PC-9 (cell line): ENCODE measurements at regions of chr6 and their contacts with region 1.

Region 1: DNA sequence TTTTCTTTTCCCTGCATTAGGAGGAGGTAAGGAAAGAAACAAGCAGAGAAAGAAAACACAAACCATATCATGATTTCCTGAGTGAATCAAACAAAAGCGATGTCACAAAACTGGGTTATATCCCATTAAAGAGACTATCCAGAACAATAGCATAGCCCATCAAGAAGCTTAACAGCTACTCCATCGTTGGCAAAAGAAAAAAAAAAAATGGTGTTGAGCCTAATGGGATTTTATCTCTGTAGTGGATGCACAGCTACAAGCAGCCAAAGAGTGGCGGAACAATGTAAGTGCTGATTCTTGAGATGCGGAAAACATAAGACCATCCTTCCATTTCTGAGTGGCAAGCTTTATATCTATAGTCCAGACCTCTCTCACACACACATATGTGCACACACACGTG is 106.2 kb upstream of the NRSN1 start:
- DNase-seq: no peak
- H3K4me3 ChIP-seq: no peak overlapping the region
- H3K27ac ChIP-seq: no peak overlapping the region
- H3K4me1 ChIP-seq: no peaks in the 10 kb centered on the region
- H3K27me3 ChIP-seq: no peaks in the 10 kb centered on the region
- CTCF ChIP-seq: no peak

Region 2: DNA sequence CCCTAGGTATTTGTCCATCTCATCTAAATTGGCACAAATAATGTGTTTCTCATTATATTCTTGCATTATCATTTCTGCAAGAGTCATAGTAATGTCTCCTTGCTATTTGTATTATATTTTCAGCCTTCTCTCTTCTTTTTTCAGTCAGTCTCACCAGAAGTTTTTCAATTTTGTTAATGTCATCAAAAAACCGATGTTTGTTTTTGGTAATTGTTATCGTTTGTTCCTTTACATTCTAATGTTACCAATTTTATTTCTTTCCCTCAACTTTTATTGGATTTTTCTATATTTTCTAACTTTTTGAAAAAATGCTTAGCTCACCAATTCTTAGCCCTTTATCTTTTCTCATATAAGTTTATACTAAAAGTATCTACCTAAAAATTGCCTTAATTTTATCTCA is 24.0 kb after region 1 on chr6:
- CTCF ChIA-PET with region 1: no interaction called
- POLR2A ChIA-PET with region 1: interaction called, 34 read pairs
- intact Hi-C with region 1: no loop called
- DNase-seq: no peak
- H3K4me3 ChIP-seq: no peak overlapping the region
- H3K27ac ChIP-seq: no peak overlapping the region
- H3K4me1 ChIP-seq: no peaks in the 10 kb centered on the region
- H3K27me3 ChIP-seq: no peaks in the 10 kb centered on the region
- CTCF ChIP-seq: no peak